ENCODE measurements at regions of chr22 and their contacts with region 1.

Region 1: GRCh38 chr22:39215426-39216120 is 29.2 kb downstream of the PDGFB start:
- DNase-seq: peak; percentile 58
- ATAC-seq: peak; percentile 22
- H3K4me3 Mint-ChIP-seq: no peak overlapping the region
- H3K27ac Mint-ChIP-seq: peak overlapping the region; percentile 99
- H3K4me1 Mint-ChIP-seq: peaks cover 43% of the 10 kb centered on the region
- H3K27me3 Mint-ChIP-seq: no peaks in the 10 kb centered on the region
- CTCF ChIP-seq: 0 out of 2 replicates have a peak, but pooled peaks have one; percentile 23

Region 2: DNA sequence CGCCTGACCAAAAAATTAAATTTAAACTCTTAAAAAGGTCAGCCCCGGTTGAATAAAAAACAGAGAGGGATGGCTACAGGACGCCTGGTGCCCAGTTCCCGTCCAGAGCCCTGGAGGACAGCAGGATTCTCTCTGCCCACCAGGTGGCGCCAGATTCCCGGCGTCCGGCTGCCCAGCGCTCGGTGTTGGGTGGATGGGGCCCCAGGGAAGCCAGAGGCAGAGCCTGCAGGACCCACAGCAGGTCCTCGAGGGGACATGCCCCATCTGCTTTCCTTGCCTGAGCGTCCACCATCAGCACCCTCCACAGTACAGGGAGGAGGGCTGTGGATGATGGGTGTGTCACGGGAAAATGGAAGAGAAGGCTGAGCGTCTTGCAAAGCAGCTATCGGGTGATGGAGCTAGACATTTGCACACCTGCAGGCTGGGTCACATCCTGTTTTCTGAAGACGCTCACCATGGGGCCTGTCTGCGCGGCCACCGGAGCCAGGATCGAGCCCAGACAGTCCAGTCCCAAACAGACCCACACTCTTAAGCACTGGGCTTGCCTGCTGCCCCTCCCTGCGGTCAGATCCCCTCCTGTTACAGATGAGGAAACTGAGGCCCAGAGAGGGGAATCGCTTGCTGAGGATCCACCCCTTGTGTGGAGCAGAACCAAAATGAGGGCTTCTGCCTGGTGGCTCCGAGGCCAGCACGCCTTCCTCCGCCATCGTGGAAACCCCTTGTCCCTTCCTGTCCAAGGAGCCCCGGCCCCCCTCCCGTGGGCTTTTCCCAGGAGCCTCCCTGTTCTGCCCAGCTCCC is 44.5 kb before region 1 on chr22:
- CTCF ChIA-PET with region 1: interaction called, 29 read pairs
- POLR2A ChIA-PET with region 1: interaction called, 45 read pairs
- DNase-seq: peak; percentile 91
- ATAC-seq: peak; percentile 43
- H3K4me3 Mint-ChIP-seq: no peak overlapping the region
- H3K27ac Mint-ChIP-seq: peak overlapping the region; percentile 92
- H3K4me1 Mint-ChIP-seq: peaks cover 63% of the 10 kb centered on the region
- H3K27me3 Mint-ChIP-seq: no peaks in the 10 kb centered on the region
- CTCF ChIP-seq: peak; percentile 97

Region 3: GRCh38 chr22:39190201-39190600 is 25.4 kb before region 1 on chr22:
- CTCF ChIA-PET with region 1: interaction called, 10 read pairs
- POLR2A ChIA-PET with region 1: no interaction called
- DNase-seq: no peak
- ATAC-seq: no peak
- H3K4me3 Mint-ChIP-seq: no peak overlapping the region
- H3K27ac Mint-ChIP-seq: no peak overlapping the region
- H3K4me1 Mint-ChIP-seq: peaks cover 11% of the 10 kb centered on the region
- H3K27me3 Mint-ChIP-seq: no peaks in the 10 kb centered on the region; the same call in 1 of the 2 replicates
- CTCF ChIP-seq: no peak

Region 4: DNA sequence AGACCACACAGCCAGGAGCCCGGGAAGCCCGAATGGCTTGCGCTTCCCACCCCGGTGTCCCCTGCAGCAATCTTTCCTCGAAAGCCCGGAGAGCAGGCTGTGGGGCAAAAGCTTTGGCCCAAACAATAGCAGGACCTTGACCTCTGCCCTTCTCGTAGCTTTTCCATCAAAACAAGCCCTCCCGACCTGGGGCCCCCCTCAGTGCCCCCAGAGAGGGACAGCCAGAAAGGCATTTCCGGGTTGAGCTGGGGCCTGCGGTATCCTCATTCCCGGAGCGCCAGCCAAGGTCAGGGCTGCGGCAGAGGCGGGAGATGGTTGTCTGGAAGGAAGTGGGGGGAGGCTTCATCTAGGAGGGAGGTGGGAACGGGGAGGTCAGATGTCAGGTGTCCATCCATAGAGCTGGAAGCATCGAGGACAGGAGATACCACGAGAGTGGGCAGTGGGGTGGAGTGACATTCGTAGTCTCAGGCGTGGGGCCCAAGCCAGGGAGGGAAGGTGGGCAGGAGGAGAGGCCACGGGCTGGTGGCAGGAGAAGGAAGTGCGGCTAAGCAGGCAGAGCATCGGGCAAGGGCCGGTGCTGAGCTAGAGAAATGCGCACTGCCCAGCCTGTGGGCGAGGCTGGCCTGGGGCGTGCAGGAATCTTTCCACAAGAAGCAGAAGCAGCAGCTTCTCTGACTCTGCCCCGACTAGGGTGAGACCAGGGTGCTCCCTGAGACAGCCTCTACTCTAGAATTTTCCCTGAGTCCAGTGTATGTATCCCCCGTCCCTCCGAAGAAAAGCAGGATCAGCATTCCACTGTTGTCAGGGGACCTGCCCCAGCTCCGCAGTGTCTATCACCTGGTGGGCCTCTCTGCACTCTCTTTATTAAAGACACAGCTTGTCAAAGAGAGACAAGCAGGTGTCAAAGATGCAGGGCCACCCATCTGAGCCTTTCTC is 15.0 kb after region 1 on chr22:
- CTCF ChIA-PET with region 1: interaction called, 43 read pairs
- POLR2A ChIA-PET with region 1: interaction called, 27 read pairs
- DNase-seq: peak; percentile 79
- ATAC-seq: peak; percentile 72
- H3K4me3 Mint-ChIP-seq: peak overlapping the region; percentile 50
- H3K27ac Mint-ChIP-seq: peak overlapping the region; percentile 92
- H3K4me1 Mint-ChIP-seq: peaks cover 54% of the 10 kb centered on the region
- H3K27me3 Mint-ChIP-seq: peaks cover 22% of the 10 kb centered on the region
- CTCF ChIP-seq: no peak

Region 5: DNA sequence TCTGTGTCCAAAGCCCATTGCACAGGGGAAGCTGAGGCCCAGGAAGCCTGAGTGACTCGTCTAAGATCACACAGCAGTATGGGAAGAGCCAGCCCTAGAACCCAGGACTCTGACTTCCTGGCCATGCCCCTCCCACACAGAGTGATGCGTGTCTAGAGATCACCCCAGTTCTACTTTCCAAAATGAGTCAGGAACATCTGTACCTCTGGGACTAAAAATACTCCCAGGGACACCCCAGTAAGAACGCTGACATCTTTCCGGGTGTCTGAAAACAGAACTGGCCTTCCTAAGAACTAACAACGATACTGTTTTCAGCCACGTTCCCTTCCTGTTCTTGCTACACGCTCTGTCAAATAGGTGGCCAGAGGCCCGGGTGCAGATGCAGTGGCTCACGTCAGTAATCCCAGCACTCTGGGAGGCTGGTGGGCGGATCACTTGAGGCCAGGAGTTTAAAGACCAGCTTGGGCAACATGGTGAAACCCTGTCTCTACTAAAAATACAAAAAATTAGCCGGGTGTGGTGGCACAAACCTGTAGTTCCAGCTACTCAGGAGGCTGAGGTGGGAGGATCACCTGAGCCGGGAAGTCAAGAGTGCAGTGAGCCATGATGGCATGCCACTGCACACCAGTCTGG is 50.9 kb after region 1 on chr22:
- CTCF ChIA-PET with region 1: interaction called, 10 read pairs
- POLR2A ChIA-PET with region 1: no interaction called
- DNase-seq: no peak
- ATAC-seq: no peak
- H3K4me3 Mint-ChIP-seq: no peak overlapping the region
- H3K27ac Mint-ChIP-seq: peak overlapping the region; percentile 82
- H3K4me1 Mint-ChIP-seq: peaks cover 16% of the 10 kb centered on the region
- H3K27me3 Mint-ChIP-seq: no peaks in the 10 kb centered on the region
- CTCF ChIP-seq: no peak

Region 6: GRCh38 chr22:39319270-39320022 is 103.9 kb after region 1 on chr22 and contains the start of gene RPL3:
- CTCF ChIA-PET with region 1: interaction called, 6 read pairs
- POLR2A ChIA-PET with region 1: interaction called, 14 read pairs
- DNase-seq: peak; percentile 93
- ATAC-seq: peak; percentile 64
- H3K4me3 Mint-ChIP-seq: peak within 1 kb of the TSS; percentile 99
- H3K27ac Mint-ChIP-seq: peak within 1 kb of the TSS; percentile 100
- H3K4me1 Mint-ChIP-seq: peaks cover 44% of the 10 kb centered on the region
- H3K27me3 Mint-ChIP-seq: peaks cover 4% of the 10 kb centered on the region; the same call in 1 of the 2 replicates
- CTCF ChIP-seq: no peak
- total RNA-seq, gene RPL3: 3,009 to 3,279 TPM (median 3,249 TPM) in 3 replicates

Measured in WTC11 (cell line).